Head of caudate nucleus (tissue), 42 donors: ENCODE measurements at regions of chr7 and their contacts with region 1.

Region 1: GRCh38 chr7:94452239-94452638 is 57.4 kb upstream of the CASD1 start:
- DNase-seq: no peak

Region 2: DNA sequence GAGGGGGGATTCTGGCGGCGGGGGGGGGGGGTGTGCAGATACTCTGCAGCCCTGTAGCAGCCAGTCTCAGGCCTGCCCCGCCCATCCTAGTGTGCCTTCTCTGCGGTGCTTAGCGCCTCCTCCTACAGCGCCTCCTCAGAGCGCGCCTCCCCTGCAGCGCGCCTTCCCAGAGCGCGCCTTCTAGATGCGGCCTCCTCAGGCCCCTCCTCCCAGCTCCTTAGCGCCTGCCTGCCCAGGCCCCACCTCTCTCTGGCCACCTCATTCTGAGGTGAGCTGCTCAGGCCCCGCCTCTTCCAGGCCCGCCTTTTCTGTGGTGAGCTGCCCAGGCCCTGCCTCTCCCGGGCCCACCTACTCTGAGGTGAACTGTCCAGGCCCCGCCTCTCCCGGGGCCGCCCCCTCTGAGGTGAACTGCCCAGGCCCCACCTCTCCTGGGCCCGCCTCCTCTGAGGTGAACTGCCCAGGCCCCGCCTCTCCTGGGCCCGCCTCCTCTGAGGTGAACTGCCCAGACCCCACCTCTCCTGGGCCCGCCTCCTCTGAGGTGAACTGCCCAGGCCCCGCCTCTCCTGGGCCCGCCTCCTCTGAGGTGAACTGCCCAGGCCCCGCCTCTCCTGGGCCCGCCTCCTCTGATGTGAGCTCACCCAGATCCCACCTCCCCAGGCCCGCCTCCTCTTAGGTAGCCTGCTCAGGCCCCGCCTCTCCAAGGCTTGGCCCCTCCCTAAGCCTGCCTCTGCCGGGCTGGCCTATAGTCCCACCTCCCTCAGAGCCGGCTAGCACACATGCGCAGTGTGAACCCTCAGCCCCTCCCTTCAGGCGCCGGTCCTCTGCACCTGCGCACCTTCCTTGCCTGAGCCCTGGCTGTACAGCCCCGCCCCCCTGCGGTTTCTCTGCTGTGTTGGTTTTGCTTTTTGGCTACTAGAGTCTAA is 205.8 kb after region 1 on chr7:
- intact Hi-C with region 1: loop called (anchors 10 kb)
- DNase-seq: peak; percentile 77 to 97 (median 93)